ENCODE measurements at regions of chr2 and their contacts with region 1.

Region 1: GRCh38 chr2:42386684-42387083 is 25.7 kb upstream of the COX7A2L start:
- DNase-seq: no peak
- ATAC-seq: no peak
- H3K4me3 Mint-ChIP-seq: no peak overlapping the region
- H3K27ac Mint-ChIP-seq: no peak overlapping the region
- H3K4me1 Mint-ChIP-seq: no peaks in the 10 kb centered on the region
- H3K27me3 Mint-ChIP-seq: no peaks in the 10 kb centered on the region

Region 2: DNA sequence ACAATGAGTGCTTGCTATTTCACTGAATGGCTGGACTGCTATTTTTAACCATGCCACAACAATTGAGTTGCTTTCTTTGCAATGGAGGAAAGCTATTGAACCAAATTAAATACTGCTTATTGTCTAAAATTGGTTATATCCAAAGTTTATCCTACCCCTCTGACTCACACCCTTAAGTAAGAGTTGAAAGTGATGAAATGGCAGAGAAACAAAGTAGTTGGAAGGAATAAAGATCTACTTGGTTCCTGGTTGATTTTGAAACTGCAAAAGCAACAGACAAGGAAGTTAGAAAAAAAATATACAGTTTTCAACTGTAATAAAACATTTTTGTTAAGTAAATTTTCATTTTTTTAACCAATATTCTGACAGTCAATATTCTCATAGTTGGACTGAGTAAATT is 170.0 kb before region 1 on chr2:
- CTCF ChIA-PET with region 1: no interaction called
- POLR2A ChIA-PET with region 1: no interaction called
- DNase-seq: no peak
- ATAC-seq: no peak
- H3K4me3 Mint-ChIP-seq: no peak overlapping the region
- H3K27ac Mint-ChIP-seq: no peak overlapping the region
- H3K4me1 Mint-ChIP-seq: peaks cover 12% of the 10 kb centered on the region
- H3K27me3 Mint-ChIP-seq: no peaks in the 10 kb centered on the region

Region 3: GRCh38 chr2:42404676-42405075 is 18.0 kb after region 1 on chr2:
- CTCF ChIA-PET with region 1: interaction called, 13 read pairs
- POLR2A ChIA-PET with region 1: no interaction called
- DNase-seq: no peak
- ATAC-seq: no peak
- H3K4me3 Mint-ChIP-seq: no peak overlapping the region
- H3K27ac Mint-ChIP-seq: no peak overlapping the region
- H3K4me1 Mint-ChIP-seq: no peaks in the 10 kb centered on the region
- H3K27me3 Mint-ChIP-seq: no peaks in the 10 kb centered on the region

Region 4: DNA sequence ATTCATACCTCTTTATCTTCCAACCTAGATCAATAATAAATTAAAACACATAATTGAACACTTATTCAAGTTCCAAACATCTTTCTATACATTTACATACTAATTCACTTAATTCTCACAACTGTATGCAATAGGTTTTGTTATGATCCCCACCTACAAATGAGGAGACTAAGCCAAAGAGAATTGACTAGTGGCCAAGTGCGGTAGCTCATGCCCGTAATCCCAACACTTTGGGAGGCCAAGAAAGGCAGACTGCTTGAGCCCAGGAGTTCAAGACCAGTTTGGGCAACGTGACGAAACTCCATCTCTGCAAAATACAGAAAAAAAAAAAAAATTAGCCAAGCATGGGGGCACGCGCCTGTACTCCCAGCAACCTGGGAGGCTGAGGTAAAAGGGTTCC is 70.3 kb after region 1 on chr2:
- CTCF ChIA-PET with region 1: no interaction called
- POLR2A ChIA-PET with region 1: no interaction called
- DNase-seq: no peak
- ATAC-seq: no peak
- H3K4me3 Mint-ChIP-seq: no peak overlapping the region
- H3K27ac Mint-ChIP-seq: no peak overlapping the region
- H3K4me1 Mint-ChIP-seq: no peaks in the 10 kb centered on the region
- H3K27me3 Mint-ChIP-seq: peaks cover 2% of the 10 kb centered on the region